Natural killer cell (primary cell): ENCODE measurements at regions of chr4 and their contacts with region 1.

Region 1: DNA sequence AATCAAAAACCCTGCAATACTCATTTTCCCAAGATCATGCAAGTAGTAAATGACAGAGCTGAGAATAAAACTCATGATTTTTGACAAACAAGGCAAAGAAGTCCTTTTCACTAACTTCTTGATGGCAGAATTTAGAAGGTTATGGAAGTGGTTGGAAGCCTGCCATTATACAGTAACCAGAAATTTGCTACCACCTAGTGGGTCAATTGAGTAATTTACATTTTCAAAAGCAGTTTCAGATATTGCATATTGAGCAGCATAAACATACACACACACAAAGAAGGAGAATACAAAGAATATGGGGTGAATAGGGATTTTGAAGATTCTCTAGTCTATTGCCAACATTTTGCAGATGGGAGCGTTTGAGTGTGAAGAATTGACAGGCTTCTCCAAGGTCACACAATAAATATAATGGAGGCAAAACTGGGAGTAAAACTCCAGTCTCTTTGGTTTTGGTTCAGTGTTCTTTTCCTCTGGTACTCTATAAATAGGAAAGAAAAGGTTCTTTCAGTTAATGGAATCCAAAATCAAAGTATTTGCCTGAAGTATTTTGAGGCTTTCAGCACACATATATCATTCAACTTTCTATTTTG is 70.2 kb downstream of the GC start:
- DNase-seq: peak in 1 of 2 donors; percentile 56
- ATAC-seq: peak; percentile 41 to 65 (median 59)
- H3K4me3 ChIP-seq: no peak overlapping the region
- H3K4me3 Mint-ChIP-seq: no peak overlapping the region
- H3K27ac ChIP-seq: no peak overlapping the region
- H3K27ac Mint-ChIP-seq: no peak overlapping the region
- H3K4me1 ChIP-seq: no peaks in the 10 kb centered on the region
- H3K4me1 Mint-ChIP-seq: no peaks in the 10 kb centered on the region
- H3K27me3 ChIP-seq: no peaks in the 10 kb centered on the region
- H3K27me3 Mint-ChIP-seq: peaks cover 3 to 28% of the 10 kb centered on the region in 2 donors
- CTCF ChIP-seq: peak; percentile 55

Region 2: GRCh38 chr4:70601422-70602039 is 1112.2 kb before region 1 on chr4:
- intact Hi-C with region 1: loop called (anchors 1 kb)
- DNase-seq: peak; percentile 37 to 82
- ATAC-seq: peak; percentile 84 to 89 (median 88)
- H3K4me3 ChIP-seq: no peak overlapping the region
- H3K4me3 Mint-ChIP-seq: no peak overlapping the region
- H3K27ac ChIP-seq: no peak overlapping the region
- H3K27ac Mint-ChIP-seq: no peak overlapping the region
- H3K4me1 ChIP-seq: no peaks in the 10 kb centered on the region
- H3K4me1 Mint-ChIP-seq: no peaks in the 10 kb centered on the region
- H3K27me3 ChIP-seq: no peaks in the 10 kb centered on the region
- H3K27me3 Mint-ChIP-seq: peaks cover 0 to 6% of the 10 kb centered on the region in 2 donors
- CTCF ChIP-seq: peak; percentile 63

Region 3: DNA sequence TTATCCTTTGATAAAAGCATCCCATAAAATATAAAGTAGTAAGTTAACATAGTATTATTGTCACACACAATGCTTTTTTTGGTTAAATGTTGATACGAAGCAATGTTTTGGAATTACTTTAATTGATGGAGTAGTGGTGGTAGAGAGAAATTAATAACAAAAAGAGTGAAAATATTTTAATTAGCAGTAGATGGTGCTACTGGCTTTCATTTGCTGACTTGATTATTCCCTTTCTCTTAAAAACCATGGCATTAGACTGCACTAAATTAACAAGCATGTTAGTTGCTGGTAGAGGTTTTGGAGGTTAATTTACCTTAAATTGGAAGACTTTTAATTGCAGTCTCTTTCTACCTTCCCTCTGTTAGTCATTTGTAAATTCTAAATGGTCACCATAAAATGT is 729.1 kb before region 1 on chr4:
- intact Hi-C with region 1: loop called (anchors 1 kb)
- DNase-seq: peak in 1 of 2 donors; percentile 51
- ATAC-seq: no peak
- H3K4me3 ChIP-seq: no peak overlapping the region
- H3K4me3 Mint-ChIP-seq: no peak overlapping the region
- H3K27ac ChIP-seq: no peak overlapping the region
- H3K27ac Mint-ChIP-seq: no peak overlapping the region
- H3K4me1 ChIP-seq: no peaks in the 10 kb centered on the region
- H3K4me1 Mint-ChIP-seq: no peaks in the 10 kb centered on the region
- H3K27me3 ChIP-seq: no peaks in the 10 kb centered on the region
- H3K27me3 Mint-ChIP-seq: no peaks in the 10 kb centered on the region
- CTCF ChIP-seq: peak; percentile 31

Region 4: DNA sequence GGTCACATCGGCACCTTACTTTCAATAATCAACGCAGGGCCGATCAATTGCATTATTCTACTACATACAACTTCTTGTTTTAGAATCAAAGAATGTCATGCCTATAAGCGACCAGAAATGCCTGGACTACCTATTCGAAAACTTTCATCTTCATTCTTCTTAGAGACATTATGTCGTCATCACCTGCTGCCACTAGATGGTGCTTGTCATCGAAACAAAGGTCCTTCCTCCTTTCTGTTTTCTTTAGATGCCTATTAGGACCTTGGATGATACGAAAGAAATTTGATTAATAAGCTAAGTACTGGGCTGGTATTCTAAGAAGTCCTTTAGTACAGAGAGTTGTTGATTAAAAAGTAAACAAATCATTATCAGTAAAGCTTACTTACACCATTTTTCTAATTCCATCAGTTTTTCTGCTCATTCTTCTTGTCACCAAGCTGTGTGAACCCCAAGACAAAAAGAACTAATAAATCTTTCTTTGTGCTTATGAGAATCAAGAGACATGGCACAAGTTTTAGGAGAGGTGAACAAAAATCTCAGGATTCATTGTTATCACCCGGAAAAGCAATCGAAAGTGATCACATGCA is 529.4 kb before region 1 on chr4:
- intact Hi-C with region 1: loop called (anchors 1 kb)
- DNase-seq: peak in 1 of 2 donors; percentile 75
- ATAC-seq: peak in 2 of 3 donors; percentile 26 to 33
- H3K4me3 ChIP-seq: no peak overlapping the region
- H3K4me3 Mint-ChIP-seq: peak overlapping the region; percentile 71
- H3K27ac ChIP-seq: no peak overlapping the region
- H3K27ac Mint-ChIP-seq: peak overlapping the region; percentile 64 to 88
- H3K4me1 ChIP-seq: peaks cover 9% of the 10 kb centered on the region
- H3K4me1 Mint-ChIP-seq: peaks cover 34 to 35% of the 10 kb centered on the region in 2 donors
- H3K27me3 ChIP-seq: no peaks in the 10 kb centered on the region
- H3K27me3 Mint-ChIP-seq: no peaks in the 10 kb centered on the region
- CTCF ChIP-seq: peak; percentile 72

Region 5: DNA sequence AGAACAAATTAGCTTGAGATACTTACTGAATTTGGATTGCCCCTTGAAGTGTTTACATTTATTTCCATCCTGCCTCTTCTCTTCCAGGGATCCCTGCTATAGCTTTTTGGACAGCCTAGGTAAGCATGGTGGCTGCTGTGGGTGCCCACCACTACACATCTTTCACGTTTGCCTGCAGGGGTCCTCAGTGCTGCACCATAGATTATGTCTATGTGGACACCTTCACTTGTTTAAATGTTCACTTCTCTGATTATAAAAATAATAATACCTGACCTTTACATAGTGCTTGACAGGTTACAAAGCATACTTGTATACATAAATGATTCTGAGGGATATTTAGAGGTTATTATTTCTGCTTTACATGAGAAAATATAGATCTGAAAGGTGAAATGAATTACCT is 442.8 kb before region 1 on chr4:
- intact Hi-C with region 1: loop called (anchors 1 kb)
- DNase-seq: peak; percentile 31 to 60
- ATAC-seq: peak; percentile 62 to 82 (median 77)
- H3K4me3 ChIP-seq: no peak overlapping the region
- H3K4me3 Mint-ChIP-seq: no peak overlapping the region
- H3K27ac ChIP-seq: no peak overlapping the region
- H3K27ac Mint-ChIP-seq: no peak overlapping the region
- H3K4me1 ChIP-seq: peaks cover 16% of the 10 kb centered on the region
- H3K4me1 Mint-ChIP-seq: peaks cover 45 to 55% of the 10 kb centered on the region in 2 donors
- H3K27me3 ChIP-seq: no peaks in the 10 kb centered on the region
- H3K27me3 Mint-ChIP-seq: no peaks in the 10 kb centered on the region
- CTCF ChIP-seq: peak; percentile 53